Activated CD8-positive, alpha-beta T cell treated with anti-CD3 and anti-CD28 coated beads for 36 hours (primary cell): ENCODE measurements at regions of chr11 and their contacts with region 1.

Region 1: DNA sequence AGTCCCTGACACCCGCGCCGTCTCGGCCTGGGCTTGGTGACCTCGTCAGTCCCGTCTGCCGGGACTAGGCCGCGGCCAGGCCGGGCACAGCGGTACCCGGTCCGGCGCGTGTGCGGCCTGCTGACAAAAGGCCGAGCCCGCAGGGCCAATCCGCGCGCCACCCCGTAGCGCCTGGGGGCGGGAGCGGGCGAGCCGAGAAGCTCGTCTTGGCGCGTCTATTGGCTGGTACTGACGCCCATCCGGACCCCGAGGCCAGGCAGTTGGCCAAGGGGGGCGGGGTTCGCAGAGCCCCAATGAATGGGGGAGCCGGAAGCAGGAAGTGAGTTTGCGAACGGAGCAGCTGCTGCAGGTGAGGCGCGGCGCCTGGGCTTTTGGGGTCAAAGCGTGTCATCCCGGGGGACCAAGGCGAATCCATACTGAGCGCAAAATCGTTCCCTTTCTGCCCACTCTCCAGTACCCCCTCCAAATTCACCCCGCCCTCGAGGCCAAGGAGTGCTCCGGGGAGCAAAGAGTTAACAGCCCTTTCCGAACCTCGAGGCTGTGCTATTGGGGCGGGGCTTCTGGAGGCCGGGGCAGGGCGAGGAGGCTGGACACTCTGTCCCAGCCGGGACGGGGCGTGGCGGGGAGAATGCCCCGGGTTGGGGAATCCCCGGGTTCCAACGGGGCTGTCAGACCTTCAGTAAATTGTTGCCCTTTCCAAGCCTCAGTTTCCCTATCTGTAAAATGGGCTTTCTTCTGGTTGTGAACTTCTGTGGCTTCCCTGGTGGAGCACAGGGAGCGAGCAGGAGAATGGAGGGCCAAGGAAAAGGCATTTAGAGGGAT is at the start of gene DPP3:
- DNase-seq: peak; percentile 98
- ATAC-seq: peak; percentile 98
- H3K4me3 Mint-ChIP-seq: peak within 1 kb of the TSS; percentile 83
- H3K27ac Mint-ChIP-seq: peak within 1 kb of the TSS; percentile 91
- H3K4me1 Mint-ChIP-seq: peaks cover 29% of the 10 kb centered on the region
- H3K27me3 Mint-ChIP-seq: no peaks in the 10 kb centered on the region
- CTCF ChIP-seq: no peak
- total RNA-seq, gene DPP3: 72.4 to 75.8 TPM

Region 2: GRCh38 chr11:66216911-66217310 is 263.4 kb before region 1 on chr11:
- CTCF ChIA-PET with region 1: no interaction called
- POLR2A ChIA-PET with region 1: no interaction called
- intact Hi-C with region 1: no loop called
- DNase-seq: no peak
- ATAC-seq: no peak
- H3K4me3 Mint-ChIP-seq: no peak overlapping the region
- H3K27ac Mint-ChIP-seq: no peak overlapping the region
- H3K4me1 Mint-ChIP-seq: peaks cover 4% of the 10 kb centered on the region
- H3K27me3 Mint-ChIP-seq: no peaks in the 10 kb centered on the region
- CTCF ChIP-seq: no peak

Region 3: GRCh38 chr11:66408488-66409214 is 71.7 kb before region 1 on chr11:
- CTCF ChIA-PET with region 1: interaction called, 11 read pairs
- POLR2A ChIA-PET with region 1: interaction called, 10 read pairs
- intact Hi-C with region 1: loop called (anchors 5 kb)
- DNase-seq: peak; percentile 95
- ATAC-seq: peak; percentile 86
- H3K4me3 Mint-ChIP-seq: peak overlapping the region; percentile 67
- H3K27ac Mint-ChIP-seq: no peak overlapping the region
- H3K4me1 Mint-ChIP-seq: peaks cover 3% of the 10 kb centered on the region
- H3K27me3 Mint-ChIP-seq: peaks cover 20% of the 10 kb centered on the region
- CTCF ChIP-seq: peak; percentile 100

Region 4: GRCh38 chr11:66438504-66439466 is 41.5 kb before region 1 on chr11 and contains the start of gene MRPL11:
- CTCF ChIA-PET with region 1: interaction called, 17 read pairs
- POLR2A ChIA-PET with region 1: interaction called, 3 read pairs
- intact Hi-C with region 1: no loop called
- DNase-seq: peak; percentile 97
- ATAC-seq: peak; percentile 99
- H3K4me3 Mint-ChIP-seq: peak within 1 kb of the TSS; percentile 96
- H3K27ac Mint-ChIP-seq: peak within 1 kb of the TSS; percentile 98
- H3K4me1 Mint-ChIP-seq: peaks cover 20% of the 10 kb centered on the region
- H3K27me3 Mint-ChIP-seq: peaks cover 1% of the 10 kb centered on the region
- CTCF ChIP-seq: peak; percentile 58
- total RNA-seq, gene MRPL11: 135 to 142 TPM

Region 5: DNA sequence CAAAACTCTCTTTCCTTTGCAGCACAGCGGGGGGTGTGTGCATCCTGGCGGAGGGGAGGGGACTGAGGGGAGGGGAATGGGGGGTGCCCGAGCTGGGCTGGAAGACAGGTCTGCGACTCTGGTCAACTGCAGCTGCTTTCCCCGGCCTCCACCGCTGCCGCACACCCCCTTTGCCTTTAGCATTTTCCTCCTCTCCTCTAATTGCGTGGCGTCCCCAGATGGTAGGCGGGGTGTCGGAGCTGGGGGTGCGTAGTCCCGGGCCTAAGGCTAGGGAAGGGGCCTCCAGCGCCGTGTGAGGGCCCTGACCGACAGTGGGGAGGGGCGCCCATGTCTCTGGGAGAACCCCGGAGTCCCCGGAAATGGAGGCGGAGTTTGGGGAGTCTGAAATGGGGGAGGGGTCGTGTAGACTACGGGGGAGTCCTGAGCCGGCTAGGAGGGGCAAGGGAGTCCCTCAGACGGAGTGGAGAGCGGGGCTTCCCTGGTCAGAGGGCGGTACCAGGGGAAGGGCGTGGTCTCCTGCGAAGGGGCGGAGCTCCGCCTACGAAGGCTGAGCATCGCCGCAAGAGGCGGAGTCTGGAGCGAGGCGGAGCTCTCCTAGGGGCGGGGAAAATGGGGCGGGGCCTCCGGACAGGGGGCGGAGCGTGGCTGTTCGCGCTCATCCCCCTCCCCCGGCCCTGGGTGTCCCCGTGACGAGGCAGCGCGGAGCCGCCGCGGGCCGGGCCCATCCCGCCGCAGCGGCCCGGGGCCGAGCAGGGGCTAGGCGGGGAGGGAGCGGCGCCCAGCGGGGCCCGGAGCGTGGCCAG is 13.9 kb before region 1 on chr11 and contains the start of gene PELI3:
- CTCF ChIA-PET with region 1: interaction called, 36 read pairs
- POLR2A ChIA-PET with region 1: interaction called, 9 read pairs
- intact Hi-C with region 1: no loop called
- DNase-seq: peak; percentile 94
- ATAC-seq: peak; percentile 92
- H3K4me3 Mint-ChIP-seq: peak within 1 kb of the TSS; percentile 86
- H3K27ac Mint-ChIP-seq: peak within 1 kb of the TSS; percentile 81
- H3K4me1 Mint-ChIP-seq: peaks cover 40% of the 10 kb centered on the region
- H3K27me3 Mint-ChIP-seq: no peaks in the 10 kb centered on the region
- CTCF ChIP-seq: no peak
- total RNA-seq, gene PELI3: 6.7 to 10.5 TPM

Region 6: DNA sequence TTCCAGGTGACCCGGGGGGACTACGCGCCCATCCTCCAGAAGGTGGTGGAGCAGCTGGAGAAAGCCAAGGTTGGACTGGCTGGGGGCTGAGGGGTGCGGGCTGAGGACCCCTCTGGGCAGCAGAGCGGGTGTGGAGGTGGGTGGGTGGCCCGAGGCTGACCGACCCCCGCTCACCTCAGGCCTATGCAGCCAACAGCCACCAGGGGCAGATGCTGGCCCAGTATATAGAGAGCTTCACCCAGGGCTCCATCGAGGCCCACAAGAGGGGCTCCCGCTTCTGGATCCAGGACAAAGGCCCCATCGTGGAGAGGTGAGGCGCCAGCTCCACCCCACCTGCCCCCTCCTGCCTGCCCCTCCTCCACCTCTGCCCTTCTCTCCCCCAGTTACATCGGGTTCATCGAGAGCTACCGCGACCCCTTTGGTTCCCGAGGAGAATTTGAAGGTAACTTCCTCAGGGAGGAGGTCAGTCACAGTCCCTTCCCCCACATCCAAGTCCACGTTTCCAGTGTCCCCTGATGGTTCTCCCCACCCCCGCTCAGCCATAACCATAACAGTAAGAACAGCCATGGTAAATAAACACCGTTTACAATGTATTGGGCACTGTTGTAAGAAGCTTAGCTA is 11.1 kb after region 1 on chr11:
- CTCF ChIA-PET with region 1: interaction called, 4 read pairs
- POLR2A ChIA-PET with region 1: interaction called, 11 read pairs
- intact Hi-C with region 1: no loop called
- DNase-seq: no peak
- ATAC-seq: peak; percentile 55
- H3K4me3 Mint-ChIP-seq: no peak overlapping the region
- H3K27ac Mint-ChIP-seq: no peak overlapping the region
- H3K4me1 Mint-ChIP-seq: no peaks in the 10 kb centered on the region
- H3K27me3 Mint-ChIP-seq: no peaks in the 10 kb centered on the region
- CTCF ChIP-seq: peak; percentile 32

Region 7: DNA sequence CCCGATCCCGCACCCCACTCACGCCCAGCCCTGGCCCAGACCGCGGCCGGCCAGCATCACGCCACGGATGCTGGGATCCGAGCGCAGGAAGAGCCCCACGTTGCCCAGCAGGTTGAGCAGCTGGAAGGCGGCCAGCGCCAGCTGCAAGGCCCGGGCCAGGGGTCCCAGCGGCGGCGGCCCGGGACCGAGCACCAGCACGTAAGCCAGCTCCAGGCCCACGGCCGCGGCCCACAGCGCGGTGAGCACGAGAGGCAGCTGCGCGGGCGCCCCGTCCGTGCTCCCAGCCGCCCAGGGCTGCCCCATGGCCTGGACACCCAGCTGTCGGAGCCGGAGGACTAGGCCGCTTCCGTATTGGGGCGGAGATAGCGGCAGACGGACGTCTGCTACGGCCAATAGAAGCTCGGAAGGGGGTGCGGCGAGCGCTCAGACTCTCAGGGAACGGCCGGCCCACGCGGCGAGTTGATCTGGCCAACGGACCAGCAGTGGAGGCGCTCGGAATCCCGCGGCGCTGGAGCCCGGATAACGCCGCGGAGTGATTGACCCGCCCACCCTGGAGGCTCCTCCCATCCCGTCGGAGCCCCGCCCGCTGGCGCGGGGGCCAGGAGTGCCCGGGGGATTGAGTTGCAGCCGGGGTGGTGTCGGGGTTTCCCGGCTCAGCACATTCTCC is 65.5 kb after region 1 on chr11 and contains the start of gene ZDHHC24:
- CTCF ChIA-PET with region 1: interaction called, 4 read pairs
- POLR2A ChIA-PET with region 1: no interaction called
- intact Hi-C with region 1: loop called (anchors 10 kb)
- DNase-seq: peak; percentile 96
- ATAC-seq: peak; percentile 90
- H3K4me3 Mint-ChIP-seq: peak within 1 kb of the TSS; percentile 85
- H3K27ac Mint-ChIP-seq: peak within 1 kb of the TSS; percentile 83
- H3K4me1 Mint-ChIP-seq: peaks cover 17% of the 10 kb centered on the region
- H3K27me3 Mint-ChIP-seq: no peaks in the 10 kb centered on the region
- CTCF ChIP-seq: no peak
- total RNA-seq, gene ZDHHC24: 13.2 to 14.0 TPM